ENCODE measurements at regions of chr2 and their contacts with region 1.

Region 1: DNA sequence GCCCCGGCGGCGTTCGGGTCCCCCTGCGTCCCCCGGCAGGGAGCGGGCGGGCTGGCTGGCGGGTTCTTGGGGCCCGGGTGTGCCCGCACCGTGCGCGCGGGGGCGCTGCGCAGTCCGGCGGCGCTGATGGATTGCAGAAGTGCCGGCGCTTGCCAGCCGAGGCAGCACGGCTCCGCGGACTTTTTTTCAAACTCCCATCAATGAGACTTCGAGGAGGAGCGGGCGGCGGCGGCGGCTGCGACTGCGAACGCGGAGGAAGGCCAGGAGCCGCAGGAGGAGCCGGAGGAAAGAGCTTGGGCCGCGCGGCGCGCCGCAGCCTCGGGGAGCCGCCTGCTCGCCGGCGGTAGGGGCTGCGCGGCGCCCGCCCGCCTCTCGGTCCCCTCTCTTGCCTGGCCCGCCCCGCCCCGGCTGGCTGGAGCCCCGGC is at the start of gene GLI2:
- DNase-seq: peak; percentile 82 to 93
- ATAC-seq: peak; percentile 86
- H3K4me3 ChIP-seq: peak within 1 kb of the TSS; percentile 29 to 46
- H3K27ac ChIP-seq: peak within 1 kb of the TSS in 1 of 2 donors; percentile 16
- H3K4me1 ChIP-seq: no peaks in the 10 kb centered on the region
- H3K27me3 ChIP-seq: no peaks in the 10 kb centered on the region
- total RNA-seq, gene GLI2: 9.0 to 18.5 TPM

Region 2: GRCh38 chr2:120765678-120766395 is 30.1 kb after region 1 on chr2:
- intact Hi-C with region 1: loop called in 1 of 2 experiments (anchors 2 kb)
- DNase-seq: peak; percentile 88 to 89
- ATAC-seq: peak; percentile 65
- H3K4me3 ChIP-seq: no peak overlapping the region
- H3K27ac ChIP-seq: no peak overlapping the region
- H3K4me1 ChIP-seq: no peaks in the 10 kb centered on the region
- H3K27me3 ChIP-seq: no peaks in the 10 kb centered on the region

Region 3: GRCh38 chr2:120939595-120940318 is 204.0 kb after region 1 on chr2:
- intact Hi-C with region 1: loop called in 1 of 2 experiments (anchors 5 kb)
- DNase-seq: no peak
- ATAC-seq: no peak
- H3K4me3 ChIP-seq: no peak overlapping the region
- H3K27ac ChIP-seq: no peak overlapping the region
- H3K4me1 ChIP-seq: peaks cover 0 to 2% of the 10 kb centered on the region in 2 donors
- H3K27me3 ChIP-seq: no peaks in the 10 kb centered on the region

Region 4: DNA sequence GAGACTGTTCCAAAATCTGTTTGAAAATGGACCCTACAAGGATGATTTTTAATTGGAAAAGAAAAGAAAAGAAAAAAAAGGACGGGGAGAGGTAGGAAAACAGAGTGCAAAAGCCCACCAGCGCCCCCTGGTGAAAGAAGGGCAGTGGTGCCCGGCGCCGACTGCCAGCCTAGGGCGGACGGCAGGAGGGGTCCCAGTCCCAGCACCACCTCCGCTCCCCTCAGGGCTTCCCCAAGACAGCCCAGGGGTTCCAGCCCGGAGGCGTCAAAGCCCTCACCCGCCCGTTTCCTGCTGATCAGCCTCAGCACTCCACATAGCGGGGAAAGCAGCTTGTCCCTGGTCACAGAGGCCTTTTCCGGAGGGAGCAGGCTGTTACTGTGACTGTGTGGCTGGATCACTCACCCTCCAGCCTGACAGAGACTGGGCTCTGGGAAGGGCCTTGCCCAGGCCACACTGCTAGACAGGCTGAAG is 335.3 kb after region 1 on chr2:
- intact Hi-C with region 1: loop called in 1 of 2 experiments (anchors 2 kb)
- DNase-seq: peak; percentile 76 to 93
- ATAC-seq: peak; percentile 74
- H3K4me3 ChIP-seq: no peak overlapping the region
- H3K27ac ChIP-seq: no peak overlapping the region
- H3K4me1 ChIP-seq: no peaks in the 10 kb centered on the region
- H3K27me3 ChIP-seq: peaks cover 0 to 3% of the 10 kb centered on the region in 2 donors

Measured in aorta (tissue), 5 donors.